CD8-positive, alpha-beta T cell (primary cell): ENCODE measurements at regions of chr13 and their contacts with region 1.

Region 1: DNA sequence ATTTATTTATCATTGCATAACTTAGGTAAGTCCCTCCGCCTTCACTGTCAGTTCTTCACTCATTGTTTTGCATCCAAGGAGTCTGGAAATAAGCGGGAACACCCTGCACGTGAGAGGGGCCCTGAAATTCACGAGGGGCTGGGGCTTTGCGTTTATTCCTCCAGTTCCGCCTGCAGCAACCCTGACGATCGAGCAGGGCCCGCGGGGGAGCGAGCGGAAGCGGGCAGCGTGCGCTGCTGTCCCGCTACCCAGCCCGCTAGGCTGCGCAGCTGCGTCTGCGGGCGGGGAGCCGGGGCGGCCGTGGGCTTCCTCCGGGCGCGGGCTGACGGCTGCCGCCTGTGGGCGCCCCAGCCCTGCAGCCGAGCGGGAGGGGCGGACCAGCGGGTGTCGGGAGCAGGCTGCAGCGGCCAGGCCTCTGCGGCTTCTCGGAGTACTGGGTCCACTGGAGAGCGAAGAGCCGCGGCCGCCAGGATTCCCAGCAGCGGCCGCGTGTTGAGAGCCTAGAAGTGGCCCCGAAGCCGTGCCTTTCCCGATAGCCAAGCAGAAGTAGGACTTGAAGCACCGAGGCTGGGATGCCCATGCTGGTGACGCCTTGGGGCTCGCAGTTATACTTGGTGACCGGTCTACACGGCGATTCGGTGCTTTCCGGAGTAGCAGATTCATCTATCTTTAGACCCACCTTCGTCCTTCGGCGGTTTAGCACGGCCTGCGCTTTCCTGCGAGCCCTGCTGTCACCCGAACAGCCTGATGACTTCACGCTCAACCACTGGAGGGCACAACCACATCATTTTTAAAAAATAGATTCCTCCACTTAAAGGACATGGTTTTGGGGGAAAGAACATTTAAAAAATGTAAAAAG is 32.9 kb upstream of the SACS start:
- DNase-seq: peak; percentile 26 to 77 (median 55)
- ATAC-seq: peak; percentile 85
- H3K4me3 ChIP-seq: peak overlapping the region; percentile 49 to 53
- H3K4me3 Mint-ChIP-seq: peak overlapping the region; percentile 82
- H3K27ac ChIP-seq: no peak overlapping the region
- H3K27ac Mint-ChIP-seq: peak overlapping the region; percentile 11
- H3K4me1 ChIP-seq: no peaks in the 10 kb centered on the region
- H3K4me1 Mint-ChIP-seq: peaks cover 5% of the 10 kb centered on the region
- H3K27me3 ChIP-seq: no peaks in the 10 kb centered on the region
- H3K27me3 Mint-ChIP-seq: peaks cover 13% of the 10 kb centered on the region
- CTCF ChIP-seq: peak; percentile 42

Region 2: DNA sequence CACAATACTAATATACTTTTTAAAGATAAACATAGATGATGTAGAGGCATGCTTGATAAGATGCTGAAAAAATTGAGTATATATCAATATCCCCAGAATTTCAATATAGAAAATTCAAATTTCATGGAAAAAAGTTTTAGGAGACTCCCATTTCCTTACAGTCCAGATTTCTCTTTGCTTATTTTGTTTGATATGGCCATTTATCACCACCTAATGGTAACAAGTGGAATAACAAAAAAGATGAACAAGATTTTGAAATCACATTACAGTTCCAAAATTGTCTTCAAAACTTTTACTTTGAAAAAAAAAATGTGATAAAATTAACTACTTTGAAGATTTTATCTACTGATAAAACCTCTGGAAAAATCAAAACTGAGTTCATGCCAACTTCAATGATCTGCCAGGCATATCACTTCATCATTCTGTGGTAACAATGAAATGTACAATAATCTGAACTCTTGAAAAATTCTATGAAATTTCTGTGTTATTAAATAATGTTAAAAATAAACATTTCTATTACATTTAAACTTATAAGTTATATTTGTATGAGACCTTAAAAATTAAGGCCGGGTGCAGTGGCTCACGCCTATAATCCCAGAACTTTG is 405.3 kb after region 1 on chr13:
- CTCF ChIA-PET with region 1: interaction called, 4 read pairs
- POLR2A ChIA-PET with region 1: no interaction called
- intact Hi-C with region 1: loop called (anchors 1 to 2 kb)
- DNase-seq: peak in 2 of 9 experiments; percentile 13 to 37
- ATAC-seq: no peak
- H3K4me3 ChIP-seq: no peak overlapping the region
- H3K4me3 Mint-ChIP-seq: no peak overlapping the region
- H3K27ac ChIP-seq: no peak overlapping the region
- H3K27ac Mint-ChIP-seq: no peak overlapping the region
- H3K4me1 ChIP-seq: no peaks in the 10 kb centered on the region
- H3K4me1 Mint-ChIP-seq: no peaks in the 10 kb centered on the region
- H3K27me3 ChIP-seq: no peaks in the 10 kb centered on the region
- H3K27me3 Mint-ChIP-seq: no peaks in the 10 kb centered on the region
- CTCF ChIP-seq: peak; percentile 73

Region 3: DNA sequence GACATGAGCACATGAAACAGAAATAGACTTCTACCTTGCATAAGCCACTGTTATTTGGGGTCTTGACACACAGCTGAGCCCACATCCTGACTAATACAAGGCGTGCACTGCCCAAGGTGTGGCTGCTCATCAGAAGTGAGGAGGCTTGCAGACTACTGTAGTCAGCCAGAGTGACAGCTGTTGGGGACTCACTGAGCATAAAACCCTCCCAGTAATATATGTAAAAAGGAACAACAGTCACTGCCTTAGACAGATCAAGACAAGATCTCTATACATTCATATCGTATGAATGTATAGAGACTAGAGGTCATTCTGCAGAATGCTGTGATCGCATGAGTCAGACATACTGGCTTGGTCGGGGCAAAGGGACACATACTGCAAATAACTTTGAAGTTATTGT is 435.0 kb after region 1 on chr13:
- CTCF ChIA-PET with region 1: no interaction called
- POLR2A ChIA-PET with region 1: no interaction called
- intact Hi-C with region 1: loop called in 1 of 2 experiments (anchors 2 kb)
- DNase-seq: no peak
- ATAC-seq: no peak
- H3K4me3 ChIP-seq: no peak overlapping the region
- H3K4me3 Mint-ChIP-seq: no peak overlapping the region
- H3K27ac ChIP-seq: no peak overlapping the region
- H3K27ac Mint-ChIP-seq: no peak overlapping the region
- H3K4me1 ChIP-seq: peaks cover 7% of the 10 kb centered on the region
- H3K4me1 Mint-ChIP-seq: peaks cover 6% of the 10 kb centered on the region
- H3K27me3 ChIP-seq: peaks cover 8 to 12% of the 10 kb centered on the region in 2 experiments
- H3K27me3 Mint-ChIP-seq: peaks cover 33% of the 10 kb centered on the region
- CTCF ChIP-seq: no peak

Region 4: DNA sequence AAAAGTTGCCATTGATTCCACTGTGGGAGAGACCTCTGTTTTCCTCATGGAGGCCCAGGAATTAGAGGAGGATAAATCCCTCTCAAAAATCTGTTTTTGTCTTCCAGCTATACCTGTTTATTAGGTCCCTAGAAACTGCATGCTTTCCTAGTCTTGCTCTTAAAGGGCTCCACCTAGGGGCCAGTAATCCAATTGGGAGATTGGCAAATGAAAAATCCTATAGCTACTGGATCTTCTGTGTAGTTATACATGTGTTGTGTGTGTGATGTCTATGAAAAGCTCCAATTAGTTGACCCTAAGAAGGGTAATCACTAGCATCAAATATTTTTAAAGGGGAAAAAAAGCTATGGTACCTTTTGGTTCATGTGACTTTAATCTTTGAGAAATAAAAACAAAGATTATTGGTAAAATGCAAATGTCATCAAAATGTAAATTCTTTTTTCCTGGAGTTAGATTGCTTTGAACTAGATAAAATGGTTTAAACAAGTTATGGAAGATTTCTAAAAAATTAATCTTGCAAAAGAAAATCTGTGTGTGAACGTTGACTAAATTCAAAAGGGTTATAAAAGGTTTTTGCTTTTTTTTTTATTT is 494.3 kb after region 1 on chr13:
- CTCF ChIA-PET with region 1: interaction called, 3 read pairs
- POLR2A ChIA-PET with region 1: no interaction called
- intact Hi-C with region 1: loop called in 1 of 2 experiments (anchors 5 kb)
- DNase-seq: peak in 2 of 9 experiments; percentile 25 to 38
- ATAC-seq: no peak
- H3K4me3 ChIP-seq: no peak overlapping the region
- H3K4me3 Mint-ChIP-seq: no peak overlapping the region
- H3K27ac ChIP-seq: no peak overlapping the region
- H3K27ac Mint-ChIP-seq: no peak overlapping the region
- H3K4me1 ChIP-seq: no peaks in the 10 kb centered on the region
- H3K4me1 Mint-ChIP-seq: peaks cover 2% of the 10 kb centered on the region
- H3K27me3 ChIP-seq: no peaks in the 10 kb centered on the region
- H3K27me3 Mint-ChIP-seq: no peaks in the 10 kb centered on the region
- CTCF ChIP-seq: peak; percentile 54